ENCODE measurements at regions of chr3 and their contacts with region 1.

Region 1: DNA sequence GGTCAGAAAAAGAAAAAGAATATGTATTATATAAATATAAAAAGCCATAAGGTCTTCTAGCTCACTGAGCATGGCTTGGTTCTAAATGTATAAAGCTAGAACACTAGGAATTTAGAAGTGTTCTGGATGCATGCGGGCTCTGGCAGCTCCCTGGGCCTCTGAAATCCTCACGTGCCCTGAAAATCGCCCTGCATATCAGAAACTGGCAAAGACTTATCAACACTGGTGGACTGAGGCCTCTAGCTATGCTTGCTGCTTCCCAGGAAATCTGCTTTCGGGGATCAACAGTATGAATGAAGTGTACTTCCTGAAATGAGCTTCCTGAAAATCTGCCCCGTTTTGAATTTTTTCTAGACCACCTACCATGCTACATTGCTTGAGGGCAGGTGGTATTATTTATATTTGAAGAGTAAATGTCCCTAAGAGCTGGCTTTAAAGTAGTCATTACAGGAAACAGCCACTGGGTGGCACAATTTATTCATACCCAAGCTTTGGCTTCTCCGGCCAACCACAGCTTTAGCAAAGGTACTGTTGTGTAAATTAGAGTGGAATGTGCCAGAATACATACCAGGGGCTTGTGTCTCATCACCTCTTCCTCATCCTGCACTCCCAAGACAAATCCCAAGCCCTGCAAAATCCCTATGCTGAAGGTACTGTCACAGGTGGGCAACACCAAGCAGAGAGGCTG is 17.7 kb downstream of the CRTAP start:
- DNase-seq: no peak
- ATAC-seq: peak; percentile 66 to 89
- H3K4me3 ChIP-seq: no peak overlapping the region
- H3K27ac ChIP-seq: no peak overlapping the region
- H3K4me1 ChIP-seq: no peaks in the 10 kb centered on the region
- H3K27me3 ChIP-seq: no peaks in the 10 kb centered on the region
- CTCF ChIP-seq: peak; percentile 44 to 80 (median 61)
- POLR2A ChIP-seq: no peak

Region 2: DNA sequence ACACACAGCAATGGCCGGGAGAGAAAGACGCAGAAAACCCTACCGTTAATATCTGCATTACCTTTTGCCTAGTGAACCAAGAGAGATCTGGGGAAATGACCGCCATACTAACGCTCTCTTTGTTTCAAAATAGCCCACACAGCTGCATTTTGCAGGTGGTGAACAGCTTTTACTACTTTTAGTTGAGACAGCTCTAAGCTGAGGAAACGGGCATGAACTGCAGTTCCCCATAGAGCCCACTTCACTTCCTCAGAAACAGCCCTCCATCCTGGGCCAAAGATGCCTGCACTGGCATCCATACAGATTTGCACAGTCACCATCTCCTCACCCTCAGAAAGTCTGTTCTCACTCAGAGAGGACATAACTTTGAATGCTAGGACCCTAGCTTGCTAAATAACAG is 1104.9 kb before region 1 on chr3:
- in situ Hi-C with region 1: no loop called
- intact Hi-C with region 1: no loop called
- DNase-seq: no peak
- ATAC-seq: no peak
- H3K4me3 ChIP-seq: no peak overlapping the region
- H3K27ac ChIP-seq: no peak overlapping the region
- H3K4me1 ChIP-seq: no peaks in the 10 kb centered on the region
- H3K27me3 ChIP-seq: no peaks in the 10 kb centered on the region
- CTCF ChIP-seq: no peak
- POLR2A ChIP-seq: no peak

Region 3: DNA sequence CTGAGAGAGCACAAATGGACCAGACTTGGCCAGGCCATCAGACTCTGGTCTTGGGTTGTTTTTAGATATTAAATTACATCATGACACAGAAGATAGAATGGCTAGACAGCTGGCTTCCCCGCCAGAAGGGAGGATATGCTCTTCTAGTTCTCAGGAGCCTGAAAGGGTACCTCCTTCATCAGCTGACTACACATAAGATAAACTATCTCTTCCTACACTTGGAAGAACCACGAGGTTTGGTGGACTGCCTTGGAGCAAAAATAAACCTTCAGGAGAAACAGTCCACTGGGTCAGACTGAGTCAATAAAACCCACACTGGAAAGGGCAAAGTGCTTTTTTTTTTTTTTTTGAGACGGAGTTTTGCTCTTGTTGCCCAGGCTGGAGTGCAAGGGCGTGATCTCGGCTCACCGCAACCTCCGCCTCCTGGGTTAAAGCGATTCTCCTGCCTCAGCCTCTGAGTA is 534.5 kb before region 1 on chr3:
- in situ Hi-C with region 1: no loop called
- intact Hi-C with region 1: no loop called
- DNase-seq: peak; percentile 38 to 46
- ATAC-seq: peak; percentile 76 to 88
- H3K4me3 ChIP-seq: no peak overlapping the region
- H3K27ac ChIP-seq: peak overlapping the region; percentile 44 to 64 (median 49)
- H3K4me1 ChIP-seq: peaks cover 10 to 23% of the 10 kb centered on the region in 2 donors
- H3K27me3 ChIP-seq: no peaks in the 10 kb centered on the region
- CTCF ChIP-seq: no peak
- POLR2A ChIP-seq: no peak

Region 4: DNA sequence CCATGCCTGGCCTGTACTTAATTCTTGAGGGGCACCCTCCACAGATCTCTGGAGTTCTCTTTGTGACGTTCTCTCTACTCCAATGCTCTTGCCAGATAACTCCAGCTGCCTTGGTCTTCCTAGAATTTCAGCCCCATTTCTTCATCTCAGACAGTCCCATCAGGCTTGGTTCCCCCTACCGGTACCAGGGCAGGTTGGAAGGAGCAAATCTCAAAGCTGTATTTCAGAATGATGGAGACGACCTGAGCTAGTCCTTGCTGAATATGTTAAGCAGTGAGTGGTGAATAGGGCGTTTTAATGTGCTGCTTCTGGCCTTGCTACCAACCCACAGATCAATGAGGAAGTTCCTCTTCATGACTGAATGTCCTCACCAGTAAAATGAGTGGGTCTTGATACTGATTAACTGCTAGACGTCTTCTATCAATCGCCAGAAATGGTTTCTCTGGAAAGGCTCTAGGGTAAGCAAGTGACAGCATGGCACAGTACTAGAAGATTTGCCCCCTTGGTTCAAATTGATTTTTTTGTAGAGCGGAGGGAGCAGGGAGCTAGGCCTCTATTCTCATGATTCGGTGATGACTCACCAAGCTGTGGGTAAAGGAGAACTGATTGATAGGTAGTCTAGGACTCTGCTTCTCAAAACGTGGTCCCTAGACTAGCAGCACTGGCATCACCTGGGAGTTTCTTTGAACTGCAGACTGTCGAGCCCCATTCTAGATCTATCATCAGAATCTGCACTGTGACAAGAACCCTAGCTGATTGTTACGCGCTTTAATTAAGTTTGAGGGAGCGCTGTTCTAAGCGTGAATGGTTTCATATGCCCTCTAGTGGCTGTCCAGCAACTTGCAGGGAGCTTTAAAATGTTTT is 241.0 kb after region 1 on chr3:
- in situ Hi-C with region 1: loop called (anchors 5 to 25 kb)
- intact Hi-C with region 1: no loop called
- DNase-seq: no peak
- ATAC-seq: peak in 1 of 2 donors; percentile 66
- H3K4me3 ChIP-seq: no peak overlapping the region
- H3K27ac ChIP-seq: no peak overlapping the region
- H3K4me1 ChIP-seq: peaks cover 4% of the 10 kb centered on the region in 2 donors
- H3K27me3 ChIP-seq: no peaks in the 10 kb centered on the region
- CTCF ChIP-seq: peak; percentile 69 to 89 (median 79)
- POLR2A ChIP-seq: no peak